H1 (cell line): ENCODE measurements at regions of chr1 and their contacts with region 1.

Region 1: DNA sequence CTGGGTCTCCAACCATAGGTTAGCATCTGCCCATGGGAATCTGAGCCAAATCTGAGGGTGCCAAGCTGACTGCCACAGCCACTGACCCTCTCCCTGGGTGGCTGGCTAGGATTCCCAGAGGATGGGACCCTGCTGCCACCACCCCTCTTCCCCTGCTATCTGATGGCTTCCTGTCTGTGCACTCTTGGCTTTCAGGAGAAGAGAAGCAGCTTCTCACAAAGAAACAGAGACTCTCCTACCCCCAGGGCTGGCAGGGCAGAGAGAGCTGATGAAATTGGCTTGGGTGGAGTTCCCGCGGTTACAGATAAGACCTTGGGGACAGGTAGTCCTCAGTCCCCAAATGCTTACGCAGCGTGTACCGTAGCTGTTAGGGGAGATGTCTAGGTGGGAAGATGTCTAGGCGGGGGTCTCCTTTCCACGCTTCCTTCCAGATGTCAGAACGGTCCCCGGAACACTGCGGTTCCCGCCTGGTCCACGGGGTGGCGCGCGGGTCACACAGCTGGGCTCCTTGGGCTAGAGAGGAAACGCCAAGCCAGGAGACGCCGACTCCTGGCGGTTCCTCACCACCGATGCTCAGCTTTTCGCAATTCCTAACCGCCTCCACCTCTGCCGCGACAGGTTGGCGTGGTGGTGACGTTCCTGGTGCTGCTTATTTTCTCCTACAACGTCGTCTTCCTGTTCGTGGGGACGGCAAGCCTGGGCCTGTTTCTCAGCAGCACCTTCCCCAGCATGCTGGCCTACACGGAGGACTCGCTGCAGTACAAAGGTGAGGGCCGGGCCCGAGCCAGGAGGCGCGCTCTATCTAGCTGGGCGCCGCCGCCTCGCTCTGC is 40.1 kb downstream of the ELK4 start:
- DNase-seq: peak; percentile 58 to 100
- H3K4me3 ChIP-seq: peak overlapping the region; percentile 26 to 57 (median 36); a peak in 5 of 8 replicates
- H3K27ac ChIP-seq: no peak overlapping the region
- H3K4me1 ChIP-seq: peaks cover 0 to 7% (median 4%) of the 10 kb centered on the region in 4 experiments; a peak in 5 of 7 replicates
- H3K27me3 ChIP-seq: 0 out of 7 replicates have a peak, but pooled peaks cover 0 to 2% (median 0%) of the 10 kb centered on the region in 4 experiments
- CTCF ChIP-seq: peak; percentile 91 to 99 (median 94)
- EP300 ChIP-seq: no peak
- POLR2A ChIP-seq: 0 out of 3 replicates have a peak, but pooled peaks of 1 of the 2 experiments have one; percentile 39
- RAD21 ChIP-seq: peak; percentile 98

Region 2: DNA sequence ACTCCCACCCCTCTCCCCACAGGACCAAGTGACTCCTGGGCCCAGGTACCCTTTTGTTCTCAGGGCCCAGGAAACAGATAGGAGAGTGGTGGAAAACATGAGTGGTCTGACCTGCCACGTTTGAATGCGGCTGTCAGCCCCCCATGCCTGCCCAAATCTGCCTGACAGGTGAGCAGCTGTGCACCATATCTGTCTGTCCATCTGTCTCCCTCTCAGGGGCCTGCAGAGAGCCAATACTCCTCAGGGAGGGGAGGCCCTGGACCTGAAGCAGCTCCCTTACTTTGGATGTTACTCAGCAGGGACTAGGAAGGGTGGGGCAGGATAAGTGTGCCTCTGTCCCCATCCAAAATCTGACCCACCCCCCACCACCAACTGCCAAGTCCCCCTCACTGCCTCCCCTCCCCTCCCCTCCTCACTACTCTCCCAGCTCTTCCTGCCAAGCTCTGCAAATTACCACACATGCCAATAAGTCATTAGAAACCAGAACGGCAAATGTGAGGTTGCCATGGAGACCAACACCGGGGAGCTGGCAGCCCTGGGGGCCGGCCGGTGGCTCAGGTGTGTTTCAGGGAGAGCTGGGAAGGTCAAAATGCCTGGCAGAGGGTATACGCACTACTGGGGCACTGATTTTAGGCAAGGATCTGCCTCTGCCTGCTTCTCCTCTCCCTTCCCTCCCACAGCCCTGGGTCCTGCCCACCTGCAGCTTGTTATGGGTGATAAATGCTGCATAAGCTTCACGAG is 917.7 kb before region 1 on chr1:
- CTCF ChIA-PET with region 1: no interaction called
- POLR2A ChIA-PET with region 1: no interaction called
- DNase-seq: peak in 1 of 2 experiments; percentile 56
- H3K4me3 ChIP-seq: no peak overlapping the region
- H3K27ac ChIP-seq: no peak overlapping the region
- H3K4me1 ChIP-seq: peaks cover 0 to 6% (median 3%) of the 10 kb centered on the region in 4 experiments; a peak in 3 of 7 replicates
- H3K27me3 ChIP-seq: no peaks in the 10 kb centered on the region; a peak in 1 of 7 replicates
- CTCF ChIP-seq: no peak
- EP300 ChIP-seq: no peak
- POLR2A ChIP-seq: no peak
- RAD21 ChIP-seq: no peak

Region 3: GRCh38 chr1:205528887-205529825 is 62.6 kb before region 1 on chr1:
- CTCF ChIA-PET with region 1: interaction called, 24 read pairs
- POLR2A ChIA-PET with region 1: interaction called, 3 read pairs
- DNase-seq: peak; percentile 56 to 100
- H3K4me3 ChIP-seq: peak overlapping the region in 2 of 4 experiments; percentile 19 to 26; a peak in 3 of 8 replicates
- H3K27ac ChIP-seq: no peak overlapping the region
- H3K4me1 ChIP-seq: peaks cover 0 to 10% (median 2%) of the 10 kb centered on the region in 4 experiments; a peak in 4 of 7 replicates
- H3K27me3 ChIP-seq: no peaks in the 10 kb centered on the region; a peak in 1 of 7 replicates
- CTCF ChIP-seq: peak in 2 of 3 experiments; percentile 85 to 94; a peak in 3 of 4 replicates
- EP300 ChIP-seq: no peak; a peak in 1 of 3 replicates
- POLR2A ChIP-seq: no peak
- RAD21 ChIP-seq: peak; percentile 77 to 88

Region 4: DNA sequence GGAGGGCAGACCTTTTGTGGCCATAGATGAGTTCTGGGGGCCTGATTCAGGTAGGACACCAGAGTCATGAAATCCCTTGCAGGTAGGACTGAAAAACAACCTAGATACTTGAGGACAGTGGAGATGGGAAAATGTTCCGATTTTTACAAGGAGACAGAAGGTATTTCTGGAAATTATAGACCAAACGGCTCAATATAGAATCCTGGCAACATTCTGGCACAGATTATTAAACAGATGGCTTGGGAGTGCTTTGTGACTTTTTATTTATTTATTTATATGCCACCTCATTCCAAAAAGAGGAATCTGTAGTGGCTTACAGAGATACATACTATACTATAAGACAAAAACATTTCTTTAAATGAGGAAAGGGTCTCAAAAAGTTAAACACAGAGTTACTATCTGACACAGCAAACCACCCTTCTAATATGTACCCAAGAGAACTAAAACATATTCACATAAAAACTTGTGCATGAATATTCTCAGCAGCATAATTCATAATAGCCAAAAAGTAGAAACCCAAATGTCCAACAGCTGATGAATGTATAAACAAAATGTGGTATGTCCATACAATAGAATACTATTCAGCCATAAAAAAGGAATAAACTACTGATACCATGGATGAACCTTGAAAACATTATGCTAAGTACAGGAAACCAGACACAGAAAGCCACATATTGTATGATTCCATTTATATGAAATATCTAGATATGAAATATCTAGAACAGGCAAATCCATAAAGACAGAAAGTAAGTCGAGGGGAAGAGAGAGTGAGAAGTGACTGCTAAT is 37.5 kb before region 1 on chr1:
- CTCF ChIA-PET with region 1: interaction called, 13 read pairs
- POLR2A ChIA-PET with region 1: no interaction called
- DNase-seq: no peak
- H3K4me3 ChIP-seq: no peak overlapping the region
- H3K27ac ChIP-seq: no peak overlapping the region
- H3K4me1 ChIP-seq: no peaks in the 10 kb centered on the region
- H3K27me3 ChIP-seq: 0 out of 7 replicates have a peak, but pooled peaks cover 0 to 2% (median 0%) of the 10 kb centered on the region in 4 experiments
- CTCF ChIP-seq: no peak
- EP300 ChIP-seq: no peak
- POLR2A ChIP-seq: no peak
- RAD21 ChIP-seq: no peak

Region 5: DNA sequence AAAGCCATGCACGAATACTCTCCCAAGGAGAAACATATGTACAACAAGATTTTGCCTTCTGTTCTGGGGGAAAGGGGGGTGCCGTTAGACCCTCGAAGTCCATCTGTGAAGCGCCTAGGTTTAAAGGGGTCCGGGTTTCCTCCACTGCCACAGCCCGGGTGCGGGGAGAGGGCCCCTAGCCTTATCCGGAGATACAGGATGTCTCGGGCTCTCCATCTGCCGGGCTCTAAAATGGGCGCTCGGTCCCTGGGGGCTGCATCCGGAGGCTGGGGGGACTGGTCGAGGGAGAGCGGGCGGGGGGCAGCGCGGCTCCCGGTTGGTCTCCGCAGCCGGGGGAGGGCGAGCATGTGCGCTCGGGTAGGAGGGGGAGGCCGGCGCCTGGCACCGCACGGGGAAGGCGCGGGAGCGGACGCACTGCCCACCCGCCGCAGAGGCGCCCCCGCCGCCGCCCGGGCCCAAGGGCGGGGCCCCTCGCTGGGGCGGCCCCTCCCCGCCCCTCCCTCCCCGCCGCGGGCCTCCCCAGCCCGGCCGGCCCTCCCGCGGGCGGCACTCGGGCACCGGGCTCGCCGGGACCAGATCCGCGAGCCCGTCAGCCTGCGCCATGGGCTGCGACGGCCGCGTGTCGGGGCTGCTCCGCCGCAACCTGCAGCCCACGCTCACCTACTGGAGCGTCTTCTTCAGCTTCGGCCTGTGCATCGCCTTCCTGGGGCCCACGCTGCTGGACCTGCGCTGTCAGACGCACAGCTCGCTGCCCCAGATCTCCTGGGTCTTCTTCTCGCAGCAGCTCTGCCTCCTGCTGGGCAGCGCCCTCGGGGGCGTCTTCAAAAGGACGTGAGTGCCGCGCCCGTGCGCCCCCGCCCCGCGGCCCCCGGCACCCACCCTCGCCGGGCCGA is 23.0 kb before region 1 on chr1:
- CTCF ChIA-PET with region 1: interaction called, 27 read pairs
- POLR2A ChIA-PET with region 1: interaction called, 5 read pairs
- DNase-seq: peak in 1 of 2 experiments; percentile 51
- H3K4me3 ChIP-seq: peak overlapping the region; percentile 23 to 67 (median 40)
- H3K27ac ChIP-seq: no peak overlapping the region
- H3K4me1 ChIP-seq: peaks cover 1 to 15% (median 6%) of the 10 kb centered on the region in 4 experiments
- H3K27me3 ChIP-seq: peaks cover 20 to 41% (median 38%) of the 10 kb centered on the region in 4 experiments
- CTCF ChIP-seq: no peak
- EP300 ChIP-seq: no peak
- POLR2A ChIP-seq: no peak
- RAD21 ChIP-seq: no peak

Region 6: GRCh38 chr1:205610036-205610435 is 18.3 kb after region 1 on chr1:
- CTCF ChIA-PET with region 1: interaction called, 10 read pairs
- POLR2A ChIA-PET with region 1: no interaction called
- DNase-seq: no peak
- H3K4me3 ChIP-seq: no peak overlapping the region
- H3K27ac ChIP-seq: no peak overlapping the region
- H3K4me1 ChIP-seq: no peaks in the 10 kb centered on the region
- H3K27me3 ChIP-seq: peaks cover 0 to 2% (median 0%) of the 10 kb centered on the region in 4 experiments; a peak in 1 of 7 replicates
- CTCF ChIP-seq: no peak
- EP300 ChIP-seq: no peak
- POLR2A ChIP-seq: no peak
- RAD21 ChIP-seq: no peak

Region 7: DNA sequence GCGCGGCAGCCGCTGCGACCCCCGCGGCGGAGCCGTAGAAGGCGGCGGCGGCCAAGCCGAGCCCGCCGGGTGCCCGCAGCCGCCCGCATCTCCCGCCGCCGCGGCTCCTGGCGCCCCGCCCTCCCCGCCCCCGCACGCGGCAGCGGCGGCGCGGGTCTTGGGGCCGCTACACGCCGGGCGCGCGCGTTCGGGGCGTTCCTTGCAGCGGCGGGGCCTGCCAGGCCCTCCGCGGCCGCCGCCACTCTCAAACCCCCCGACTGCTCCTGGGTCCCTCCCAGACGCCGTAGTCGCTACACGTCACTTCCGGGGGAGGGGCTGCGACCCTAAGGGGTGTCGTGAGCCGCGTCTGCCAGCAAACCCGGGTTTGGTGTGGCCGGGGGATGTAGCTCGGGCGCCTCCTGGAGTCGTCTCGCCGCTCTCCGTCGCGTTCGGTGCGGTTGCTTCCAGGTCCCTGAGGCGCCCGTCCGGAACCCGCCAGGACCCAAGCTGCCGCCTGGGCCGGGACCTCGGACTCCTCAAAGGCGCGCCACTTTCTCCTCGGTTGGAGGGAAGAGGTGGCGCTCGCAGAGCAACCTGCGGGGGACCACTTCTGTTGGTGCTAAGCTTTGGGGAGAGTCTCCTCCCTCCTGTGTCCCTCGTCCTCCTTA is 40.1 kb after region 1 on chr1 and contains the start of gene ELK4:
- CTCF ChIA-PET with region 1: interaction called, 119 read pairs
- POLR2A ChIA-PET with region 1: interaction called, 28 read pairs
- DNase-seq: peak; percentile 91 to 99
- H3K4me3 ChIP-seq: peak within 1 kb of the TSS; percentile 72 to 90 (median 78)
- H3K27ac ChIP-seq: peak within 1 kb of the TSS; percentile 93
- H3K4me1 ChIP-seq: no peaks in the 10 kb centered on the region; a peak in 2 of 7 replicates
- H3K27me3 ChIP-seq: no peaks in the 10 kb centered on the region
- CTCF ChIP-seq: peak; percentile 64 to 71 (median 65)
- EP300 ChIP-seq: peak in 1 of 2 experiments; percentile 14; a peak in 1 of 3 replicates
- POLR2A ChIP-seq: peak; percentile 83 to 95
- RAD21 ChIP-seq: peak; percentile 74 to 75
- total RNA-seq, gene ELK4: 23.3 and 26.3 TPM in 2 replicates

Region 8: GRCh38 chr1:205700865-205701401 is 109.2 kb after region 1 on chr1:
- CTCF ChIA-PET with region 1: interaction called, 23 read pairs
- POLR2A ChIA-PET with region 1: interaction called, 4 read pairs
- DNase-seq: no peak
- H3K4me3 ChIP-seq: peak overlapping the region in 1 of 4 experiments; percentile 6; a peak in 1 of 8 replicates
- H3K27ac ChIP-seq: no peak overlapping the region
- H3K4me1 ChIP-seq: peaks cover 0 to 7% (median 5%) of the 10 kb centered on the region in 4 experiments; a peak in 4 of 7 replicates
- H3K27me3 ChIP-seq: no peaks in the 10 kb centered on the region
- CTCF ChIP-seq: no peak
- EP300 ChIP-seq: no peak
- POLR2A ChIP-seq: no peak
- RAD21 ChIP-seq: 0 out of 4 replicates have a peak, but pooled peaks of 1 of the 2 experiments have one; percentile 1